Activated CD4-positive, alpha-beta T cell treated with anti-CD3 and anti-CD28 coated beads for 36 hours (primary cell): ENCODE measurements at regions of chr2 and their contacts with region 1.

Region 1: GRCh38 chr2:69829256-69830046 is at the start of gene GMCL1:
- DNase-seq: peak; percentile 99
- ATAC-seq: peak; percentile 96
- H3K4me3 Mint-ChIP-seq: peak within 1 kb of the TSS; percentile 83
- H3K27ac Mint-ChIP-seq: peak within 1 kb of the TSS; percentile 94
- H3K4me1 Mint-ChIP-seq: peaks cover 49% of the 10 kb centered on the region
- H3K27me3 Mint-ChIP-seq: no peaks in the 10 kb centered on the region
- total RNA-seq, gene GMCL1: 14.5 to 20.3 TPM

Region 2: GRCh38 chr2:69386789-69387734 is 442.4 kb before region 1 on chr2 and contains the start of gene GFPT1:
- CTCF ChIA-PET with region 1: no interaction called
- POLR2A ChIA-PET with region 1: no interaction called
- intact Hi-C with region 1: loop called in 1 of 2 experiments (anchors 1 kb)
- DNase-seq: peak; percentile 96
- ATAC-seq: peak; percentile 96
- H3K4me3 Mint-ChIP-seq: peak within 1 kb of the TSS; percentile 81
- H3K27ac Mint-ChIP-seq: peak within 1 kb of the TSS; percentile 92
- H3K4me1 Mint-ChIP-seq: peaks cover 45% of the 10 kb centered on the region
- H3K27me3 Mint-ChIP-seq: no peaks in the 10 kb centered on the region
- total RNA-seq, gene GFPT1: 31.0 to 36.1 TPM

Region 3: GRCh38 chr2:69741619-69742466 is 87.6 kb before region 1 on chr2 and contains the start of gene ANXA4:
- CTCF ChIA-PET with region 1: no interaction called
- POLR2A ChIA-PET with region 1: no interaction called
- intact Hi-C with region 1: loop called in 1 of 2 experiments (anchors 1 kb)
- DNase-seq: peak; percentile 73
- ATAC-seq: peak; percentile 86
- H3K4me3 Mint-ChIP-seq: peak within 1 kb of the TSS; percentile 78
- H3K27ac Mint-ChIP-seq: peak within 1 kb of the TSS; percentile 81
- H3K4me1 Mint-ChIP-seq: peaks cover 11% of the 10 kb centered on the region
- H3K27me3 Mint-ChIP-seq: no peaks in the 10 kb centered on the region
- total RNA-seq, gene ANXA4: 24.8 to 30.7 TPM

Region 4: DNA sequence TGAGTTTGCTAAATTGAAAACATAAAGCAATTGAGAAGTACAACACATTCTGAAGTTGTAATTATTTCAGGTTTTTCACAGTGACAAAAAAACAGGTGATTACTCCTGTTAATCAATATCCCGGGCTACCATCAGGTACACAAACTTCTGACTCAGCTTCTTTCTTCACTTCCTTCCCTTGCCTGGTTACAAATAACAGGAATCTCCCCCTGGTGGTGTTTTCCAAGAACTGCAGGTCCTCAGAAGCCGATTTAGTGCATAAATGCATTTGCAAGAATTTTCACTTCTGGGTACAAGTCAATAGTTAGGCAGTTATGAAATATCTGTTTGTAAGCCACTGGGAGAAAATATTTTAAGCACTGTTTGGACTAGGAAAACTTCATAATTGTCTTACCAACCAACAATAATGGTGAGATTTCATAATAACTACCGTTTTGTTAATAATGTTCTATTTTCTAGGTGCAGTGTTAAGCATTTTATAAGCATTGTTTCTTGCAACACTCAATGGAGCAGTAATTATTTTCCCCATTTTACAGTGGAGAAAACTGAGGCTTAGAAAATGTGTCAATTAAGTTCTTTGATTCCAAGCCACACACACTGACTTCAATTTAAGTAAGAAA is 12.4 kb before region 1 on chr2:
- CTCF ChIA-PET with region 1: interaction called, 35 read pairs
- POLR2A ChIA-PET with region 1: interaction called, 6 read pairs
- intact Hi-C with region 1: no loop called
- DNase-seq: peak; percentile 82
- ATAC-seq: peak; percentile 74
- H3K4me3 Mint-ChIP-seq: no peak overlapping the region
- H3K27ac Mint-ChIP-seq: no peak overlapping the region
- H3K4me1 Mint-ChIP-seq: peaks cover 4% of the 10 kb centered on the region
- H3K27me3 Mint-ChIP-seq: no peaks in the 10 kb centered on the region

Region 5: DNA sequence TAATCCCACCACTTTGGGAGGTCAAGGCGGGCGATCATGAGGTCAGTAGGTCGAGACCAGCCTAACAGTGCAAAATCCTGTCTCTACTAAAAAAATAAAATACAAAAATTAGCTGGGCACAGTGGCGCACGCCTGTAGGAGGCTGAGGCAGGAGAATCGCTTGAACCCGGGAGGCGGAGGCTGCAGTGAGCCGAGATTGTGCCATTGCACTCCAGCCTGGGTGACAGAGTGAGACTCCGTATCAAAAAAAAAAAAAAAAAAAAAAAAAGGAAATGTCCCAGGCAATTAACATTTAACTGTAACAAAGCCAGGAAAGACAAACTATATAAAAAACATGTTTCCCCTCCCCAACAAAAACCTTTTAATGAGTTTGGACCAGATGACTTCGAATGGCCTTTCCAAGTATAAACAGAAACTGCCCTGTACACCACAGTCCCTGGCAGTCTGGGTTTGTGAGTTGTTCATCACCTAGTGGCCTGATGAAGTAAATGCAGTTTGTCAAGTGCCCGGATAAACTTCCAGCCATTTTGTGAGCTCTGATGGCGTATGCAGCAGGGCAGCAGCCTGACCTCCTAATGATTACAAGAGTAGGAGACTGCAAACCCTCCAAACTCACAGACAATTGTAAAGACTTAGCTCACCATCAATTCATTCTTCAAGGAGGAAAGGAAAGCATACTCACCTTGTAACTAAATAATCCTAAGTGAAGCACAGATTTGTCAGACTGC is 241.3 kb after region 1 on chr2:
- CTCF ChIA-PET with region 1: no interaction called
- POLR2A ChIA-PET with region 1: no interaction called
- intact Hi-C with region 1: loop called in 1 of 2 experiments (anchors 2 kb)
- DNase-seq: peak; percentile 73
- ATAC-seq: peak; percentile 60
- H3K4me3 Mint-ChIP-seq: peak overlapping the region; percentile 48
- H3K27ac Mint-ChIP-seq: peak overlapping the region; percentile 94
- H3K4me1 Mint-ChIP-seq: peaks cover 51% of the 10 kb centered on the region
- H3K27me3 Mint-ChIP-seq: no peaks in the 10 kb centered on the region

Region 6: DNA sequence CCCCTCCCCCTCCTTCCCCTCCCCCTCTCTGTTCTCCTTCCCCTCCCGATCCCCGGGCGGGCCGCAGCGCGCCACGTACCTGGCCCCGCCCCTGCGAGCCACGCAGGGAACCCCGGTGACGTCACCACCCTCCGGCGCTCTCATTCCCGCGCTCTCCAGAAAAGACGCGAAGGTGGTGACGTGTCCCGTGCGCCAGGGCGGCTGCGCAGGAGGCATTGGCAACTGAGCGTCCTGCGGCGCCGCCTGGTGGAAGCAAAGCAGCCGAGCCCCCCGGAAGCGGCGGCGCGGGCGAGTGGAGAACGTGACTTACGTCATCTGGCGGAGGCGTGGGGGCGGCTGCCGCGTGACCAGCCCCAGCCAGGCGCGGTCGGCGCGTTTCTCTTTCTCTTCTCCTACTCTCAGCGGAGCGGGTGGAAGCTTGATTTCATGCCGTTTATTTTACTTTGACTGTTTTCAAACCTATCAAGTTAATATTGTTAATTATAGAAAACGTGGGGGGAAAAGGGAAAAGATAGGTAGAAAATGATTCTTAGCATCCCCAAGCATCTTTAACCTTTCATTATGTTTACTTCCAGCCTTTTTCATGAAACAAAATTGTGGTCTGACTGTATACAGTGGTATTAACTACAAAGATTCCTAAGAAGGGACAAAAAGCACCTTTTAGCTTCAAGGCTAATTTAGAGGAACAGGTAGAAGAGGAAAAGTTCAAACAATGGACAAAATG is 313.3 kb after region 1 on chr2:
- CTCF ChIA-PET with region 1: no interaction called
- POLR2A ChIA-PET with region 1: no interaction called
- intact Hi-C with region 1: loop called in 1 of 2 experiments (anchors 1 kb)
- DNase-seq: peak; percentile 100
- ATAC-seq: peak; percentile 57
- H3K4me3 Mint-ChIP-seq: peak overlapping the region; percentile 78
- H3K27ac Mint-ChIP-seq: peak overlapping the region; percentile 100
- H3K4me1 Mint-ChIP-seq: peaks cover 66% of the 10 kb centered on the region
- H3K27me3 Mint-ChIP-seq: no peaks in the 10 kb centered on the region

Region 7: GRCh38 chr2:70248181-70248847 is 418.9 kb after region 1 on chr2 and contains the start of gene TIA1:
- CTCF ChIA-PET with region 1: no interaction called
- POLR2A ChIA-PET with region 1: no interaction called
- intact Hi-C with region 1: loop called in 1 of 2 experiments (anchors 1 kb)
- DNase-seq: peak; percentile 99
- ATAC-seq: peak; percentile 98
- H3K4me3 Mint-ChIP-seq: peak within 1 kb of the TSS; percentile 98
- H3K27ac Mint-ChIP-seq: peak within 1 kb of the TSS; percentile 97
- H3K4me1 Mint-ChIP-seq: peaks cover 30% of the 10 kb centered on the region
- H3K27me3 Mint-ChIP-seq: no peaks in the 10 kb centered on the region
- total RNA-seq, gene TIA1: 85.4 to 98.3 TPM